ENCODE measurements at regions of chr14 and their contacts with region 1.

Region 1: GRCh38 chr14:23076785-23077408 is 18.0 kb downstream of the ACIN1 start:
- DNase-seq: no peak
- ATAC-seq: peak; percentile 79
- H3K4me3 ChIP-seq: no peak overlapping the region
- H3K27ac ChIP-seq: no peak overlapping the region
- H3K4me1 ChIP-seq: 0 out of 2 replicates have a peak, but pooled peaks cover 1% of the 10 kb centered on the region
- H3K27me3 ChIP-seq: no peaks in the 10 kb centered on the region
- CTCF ChIP-seq: peak; percentile 49 to 60 (median 59)
- EP300 ChIP-seq: no peak
- POLR2A ChIP-seq: no peak
- RAD21 ChIP-seq: peak; percentile 48; the same call in 1 of the 2 replicates

Region 2: GRCh38 chr14:23020143-23021128 is 56.5 kb before region 1 on chr14:
- CTCF ChIA-PET with region 1: no interaction called
- POLR2A ChIA-PET with region 1: no interaction called
- RAD21 ChIA-PET with region 1: no interaction called
- SMC1A ChIA-PET with region 1: no interaction called
- in situ Hi-C with region 1: no loop called
- intact Hi-C with region 1: no loop called
- DNase-seq: no peak
- ATAC-seq: no peak
- H3K4me3 ChIP-seq: no peak overlapping the region
- H3K27ac ChIP-seq: no peak overlapping the region
- H3K4me1 ChIP-seq: no peaks in the 10 kb centered on the region
- H3K27me3 ChIP-seq: no peaks in the 10 kb centered on the region
- CTCF ChIP-seq: no peak
- EP300 ChIP-seq: no peak
- POLR2A ChIP-seq: no peak
- RAD21 ChIP-seq: no peak

Region 3: DNA sequence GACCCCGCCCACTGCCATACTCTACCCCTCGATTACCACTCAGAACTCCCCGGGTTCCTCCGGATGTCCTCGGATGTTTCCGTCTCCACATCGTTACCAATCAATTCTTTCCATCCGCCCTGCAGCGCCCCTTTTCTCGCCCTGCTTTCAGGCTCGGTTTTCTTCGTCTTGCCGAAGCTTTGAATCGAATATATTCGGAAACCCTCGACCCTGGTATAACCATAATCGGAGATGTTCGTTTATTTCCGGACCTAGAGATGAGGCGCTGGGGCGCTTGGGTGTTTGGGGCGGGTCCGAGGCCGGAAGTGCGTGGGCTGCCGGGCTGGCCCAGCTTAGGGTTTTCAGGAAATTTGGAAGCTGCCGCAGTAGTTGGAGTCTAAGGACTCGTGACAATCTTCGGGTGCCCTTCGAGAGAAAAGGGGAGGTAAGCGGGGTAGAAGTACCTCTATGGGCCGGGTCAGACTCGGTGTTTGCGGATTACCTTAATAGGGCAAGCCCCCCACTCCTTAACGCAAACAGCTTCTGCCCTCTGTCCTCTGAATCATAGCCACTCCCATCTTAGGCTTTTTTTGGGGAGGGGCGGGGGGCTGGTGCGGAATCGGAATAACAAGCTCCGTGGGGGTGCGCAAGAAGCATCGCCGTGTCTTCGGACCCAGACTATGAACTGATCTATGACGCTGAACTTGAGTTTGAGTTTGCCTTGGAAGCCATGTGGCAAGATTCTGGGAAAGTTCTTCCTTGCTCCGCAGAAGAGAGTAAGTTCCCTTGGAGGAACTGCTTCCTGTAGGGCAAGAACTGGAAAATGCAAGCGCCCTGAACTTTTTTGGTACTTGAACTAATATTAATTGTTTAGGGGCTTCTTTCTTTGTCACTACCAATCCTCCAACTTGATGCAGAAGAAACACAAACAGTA is 18.6 kb after region 1 on chr14 and contains the start of gene C14orf119:
- CTCF ChIA-PET with region 1: interaction called, 65 read pairs
- POLR2A ChIA-PET with region 1: interaction called, 19 read pairs
- RAD21 ChIA-PET with region 1: interaction called, 23 read pairs
- SMC1A ChIA-PET with region 1: interaction called, 15 read pairs
- in situ Hi-C with region 1: no loop called
- intact Hi-C with region 1: no loop called
- DNase-seq: peak; percentile 99
- ATAC-seq: peak; percentile 93
- H3K4me3 ChIP-seq: peak within 1 kb of the TSS; percentile 92
- H3K27ac ChIP-seq: peak within 1 kb of the TSS; percentile 99
- H3K4me1 ChIP-seq: peaks cover 3% of the 10 kb centered on the region; the same call in 1 of the 2 replicates
- H3K27me3 ChIP-seq: no peaks in the 10 kb centered on the region
- CTCF ChIP-seq: no peak
- EP300 ChIP-seq: no peak
- POLR2A ChIP-seq: peak; percentile 61; the same call in 1 of the 2 replicates
- RAD21 ChIP-seq: no peak
- polyA plus RNA-seq, gene C14orf119: 166 to 228 TPM

Region 4: GRCh38 chr14:23113431-23114119 is 36.7 kb after region 1 on chr14:
- CTCF ChIA-PET with region 1: interaction called, 10 read pairs
- POLR2A ChIA-PET with region 1: no interaction called
- RAD21 ChIA-PET with region 1: no interaction called
- SMC1A ChIA-PET with region 1: interaction called, 5 read pairs
- in situ Hi-C with region 1: no loop called
- intact Hi-C with region 1: no loop called
- DNase-seq: no peak
- ATAC-seq: no peak
- H3K4me3 ChIP-seq: no peak overlapping the region
- H3K27ac ChIP-seq: no peak overlapping the region
- H3K4me1 ChIP-seq: no peaks in the 10 kb centered on the region
- H3K27me3 ChIP-seq: peaks cover 0 to 7% of the 10 kb centered on the region in 2 experiments; a peak in 3 of 4 replicates
- CTCF ChIP-seq: no peak
- EP300 ChIP-seq: no peak
- POLR2A ChIP-seq: no peak
- RAD21 ChIP-seq: no peak